ENCODE measurements at regions of chr1 and their contacts with region 1.

Region 1: GRCh38 chr1:33127001-33127791 is 46.2 kb downstream of the AZIN2 start:
- DNase-seq: peak; percentile 100
- H3K4me3 ChIP-seq: peak overlapping the region; percentile 73
- H3K27ac ChIP-seq: peak overlapping the region; percentile 86
- H3K4me1 ChIP-seq: peaks cover 29% of the 10 kb centered on the region
- H3K27me3 ChIP-seq: no peaks in the 10 kb centered on the region
- CTCF ChIP-seq: peak; percentile 99

Region 2: DNA sequence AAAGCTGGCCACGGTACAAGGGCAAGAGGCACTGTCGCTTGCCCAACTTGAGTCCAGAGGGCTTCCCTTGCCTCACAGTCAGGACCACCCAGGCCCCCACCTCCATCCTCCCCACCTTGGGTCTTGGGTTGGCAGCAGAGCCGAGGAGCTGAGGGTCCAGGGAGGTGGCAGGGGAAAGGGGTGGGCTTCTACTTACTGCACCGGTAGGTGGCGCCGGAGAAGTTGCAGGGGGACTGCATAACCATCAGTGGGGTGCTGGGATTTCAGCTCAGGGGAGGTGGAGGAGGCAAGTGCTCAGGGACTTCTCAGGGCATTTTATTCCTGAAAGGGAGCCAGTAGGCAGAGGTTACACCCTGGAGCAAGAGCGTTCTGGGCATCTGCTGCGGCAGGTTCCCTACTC is 10.6 kb after region 1 on chr1:
- CTCF ChIA-PET with region 1: interaction called, 11 read pairs
- POLR2A ChIA-PET with region 1: no interaction called
- intact Hi-C with region 1: no loop called
- DNase-seq: peak; percentile 72
- H3K4me3 ChIP-seq: no peak overlapping the region
- H3K27ac ChIP-seq: no peak overlapping the region
- H3K4me1 ChIP-seq: peaks cover 8% of the 10 kb centered on the region
- H3K27me3 ChIP-seq: no peaks in the 10 kb centered on the region
- CTCF ChIP-seq: peak; percentile 84

Region 3: GRCh38 chr1:33361532-33362235 is 234.5 kb after region 1 on chr1:
- CTCF ChIA-PET with region 1: no interaction called
- POLR2A ChIA-PET with region 1: no interaction called
- intact Hi-C with region 1: loop called (anchors 5 kb)
- DNase-seq: no peak
- H3K4me3 ChIP-seq: no peak overlapping the region
- H3K27ac ChIP-seq: peak overlapping the region; percentile 94
- H3K4me1 ChIP-seq: peaks cover 44% of the 10 kb centered on the region
- H3K27me3 ChIP-seq: no peaks in the 10 kb centered on the region
- CTCF ChIP-seq: no peak

Measured in A673 (cell line).